ENCODE measurements at regions of chr15 and their contacts with region 1.

Region 1: GRCh38 chr15:76336254-76337058 is at the start of gene ISL2:
- DNase-seq: peak; percentile 79
- H3K4me3 Mint-ChIP-seq: peak within 1 kb of the TSS; percentile 77
- H3K27ac Mint-ChIP-seq: peak within 1 kb of the TSS; percentile 67
- H3K4me1 Mint-ChIP-seq: peaks cover 62% of the 10 kb centered on the region
- H3K27me3 Mint-ChIP-seq: peaks cover 93% of the 10 kb centered on the region

Region 2: GRCh38 chr15:76073575-76073974 is 262.9 kb before region 1 on chr15:
- CTCF ChIA-PET with region 1: no interaction called
- DNase-seq: no peak
- H3K4me3 Mint-ChIP-seq: no peak overlapping the region
- H3K27ac Mint-ChIP-seq: no peak overlapping the region
- H3K4me1 Mint-ChIP-seq: no peaks in the 10 kb centered on the region
- H3K27me3 Mint-ChIP-seq: peaks cover 10% of the 10 kb centered on the region

Region 3: GRCh38 chr15:76190834-76191538 is 145.5 kb before region 1 on chr15:
- CTCF ChIA-PET with region 1: interaction called, 20 read pairs
- DNase-seq: peak; percentile 79
- H3K4me3 Mint-ChIP-seq: no peak overlapping the region
- H3K27ac Mint-ChIP-seq: no peak overlapping the region
- H3K4me1 Mint-ChIP-seq: peaks cover 14% of the 10 kb centered on the region
- H3K27me3 Mint-ChIP-seq: peaks cover 82% of the 10 kb centered on the region

Measured in activated naive CD4-positive, alpha-beta T cell treated with anti-CD3 and anti-CD28 coated beads, Interleukin-2, amount 10 ng/mL, durations not matched to agents 7 days and 5 days (primary cell).